ENCODE measurements at regions of chr19 and their contacts with region 1.

Region 1: GRCh38 chr19:2084993-2085720 is 11.0 kb downstream of the MOB3A start:
- DNase-seq: peak; percentile 97
- H3K4me3 Mint-ChIP-seq: peak overlapping the region; percentile 93
- H3K27ac Mint-ChIP-seq: peak overlapping the region; percentile 98
- H3K4me1 Mint-ChIP-seq: peaks cover 65% of the 10 kb centered on the region
- H3K27me3 Mint-ChIP-seq: no peaks in the 10 kb centered on the region

Region 2: DNA sequence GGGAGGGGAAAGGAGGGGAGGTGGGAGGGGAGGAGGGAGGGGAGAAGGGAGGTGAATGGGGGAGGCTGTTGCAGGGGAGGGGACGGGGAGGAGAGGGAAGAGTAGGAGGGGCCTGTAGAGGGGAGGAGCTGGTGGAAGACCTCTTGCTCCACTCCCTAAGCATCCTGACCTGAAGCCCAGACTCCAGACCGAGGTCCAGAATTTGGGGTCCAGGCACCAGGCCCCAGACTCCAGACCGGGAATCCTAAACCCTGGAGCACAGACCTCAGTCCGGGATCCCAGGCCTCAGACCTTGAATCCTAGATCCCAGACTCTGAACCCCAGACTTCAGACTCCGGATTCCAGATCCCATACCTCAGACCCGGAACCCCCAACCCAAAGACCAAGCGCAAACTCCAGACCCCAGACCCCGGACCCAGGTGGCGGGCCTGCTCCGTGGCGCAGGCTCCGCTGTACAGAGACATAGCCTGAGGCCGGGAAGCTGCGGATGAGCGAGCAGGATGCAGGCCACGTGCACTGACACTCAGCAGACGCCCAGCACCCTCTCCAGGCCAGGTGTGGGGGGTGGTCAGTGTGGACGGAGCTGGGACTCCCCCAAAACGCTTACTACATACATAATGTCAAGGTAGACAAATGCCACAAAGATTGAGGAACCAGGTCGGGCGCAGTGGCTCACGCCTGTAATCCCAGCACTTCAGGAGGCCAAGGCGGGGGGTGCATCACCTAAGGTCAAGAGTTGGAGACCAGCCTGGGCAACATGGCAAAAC is 68.9 kb before region 1 on chr19:
- CTCF ChIA-PET with region 1: interaction called, 6 read pairs
- intact Hi-C with region 1: loop called (anchors 5 kb)
- DNase-seq: peak; percentile 77
- H3K4me3 Mint-ChIP-seq: peak overlapping the region; percentile 59
- H3K27ac Mint-ChIP-seq: peak overlapping the region; percentile 47
- H3K4me1 Mint-ChIP-seq: peaks cover 17% of the 10 kb centered on the region
- H3K27me3 Mint-ChIP-seq: no peaks in the 10 kb centered on the region

Region 3: GRCh38 chr19:2050991-2051772 is 34.0 kb before region 1 on chr19 and contains the start of gene MKNK2:
- CTCF ChIA-PET with region 1: no interaction called
- intact Hi-C with region 1: loop called (anchors 2 kb)
- DNase-seq: peak; percentile 93
- H3K4me3 Mint-ChIP-seq: peak within 1 kb of the TSS; percentile 85
- H3K27ac Mint-ChIP-seq: peak within 1 kb of the TSS; percentile 93
- H3K4me1 Mint-ChIP-seq: peaks cover 53% of the 10 kb centered on the region
- H3K27me3 Mint-ChIP-seq: no peaks in the 10 kb centered on the region
- total RNA-seq, gene MKNK2: 155 to 157 TPM

Region 4: GRCh38 chr19:2123682-2124387 is 38.7 kb after region 1 on chr19:
- CTCF ChIA-PET with region 1: no interaction called
- intact Hi-C with region 1: no loop called
- DNase-seq: peak; percentile 23
- H3K4me3 Mint-ChIP-seq: no peak overlapping the region
- H3K27ac Mint-ChIP-seq: no peak overlapping the region
- H3K4me1 Mint-ChIP-seq: no peaks in the 10 kb centered on the region
- H3K27me3 Mint-ChIP-seq: no peaks in the 10 kb centered on the region

Region 5: DNA sequence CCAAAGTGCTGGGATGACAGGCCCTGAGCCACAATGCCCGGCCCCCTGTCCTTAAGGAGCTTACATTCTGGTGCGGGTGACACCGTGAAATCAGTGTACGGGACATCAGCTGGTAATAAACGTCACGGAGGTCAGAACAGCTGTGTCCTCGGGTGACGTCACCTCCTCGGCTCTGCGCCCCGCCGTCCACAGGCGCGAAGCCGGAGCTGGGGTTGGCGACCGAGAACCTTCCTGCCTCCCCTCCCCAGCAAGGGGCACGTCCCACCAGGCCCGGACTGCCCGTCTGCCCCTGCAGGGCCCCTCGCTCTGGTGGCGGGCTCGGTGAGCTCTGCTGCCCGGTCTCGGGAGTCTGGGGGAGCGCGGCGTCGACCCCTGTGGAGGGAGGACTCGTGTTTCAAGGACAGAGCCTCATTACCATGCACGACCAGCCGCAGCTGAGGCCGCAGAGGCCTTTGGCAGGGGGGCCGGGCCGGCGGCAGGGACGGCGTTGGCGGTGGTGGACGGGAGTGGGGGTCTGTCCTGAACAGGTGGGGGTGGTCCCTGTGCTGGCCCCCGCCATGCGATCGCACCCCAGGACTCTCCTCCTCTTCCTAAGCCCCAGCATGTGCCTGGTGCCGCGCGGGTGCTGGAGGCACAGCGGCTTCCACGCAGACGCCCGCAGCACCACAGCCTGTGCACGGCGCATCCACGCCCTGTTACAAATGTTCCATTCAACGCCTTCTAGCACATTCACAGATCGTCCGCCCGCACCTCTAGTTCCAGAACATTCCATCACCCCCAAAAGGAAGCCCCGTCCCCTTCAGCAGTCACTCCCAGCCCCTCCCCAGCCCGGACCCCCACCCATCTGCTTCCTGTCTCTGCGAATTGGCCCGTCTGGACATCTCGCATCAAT is 217.4 kb after region 1 on chr19:
- CTCF ChIA-PET with region 1: no interaction called
- intact Hi-C with region 1: no loop called
- DNase-seq: no peak
- H3K4me3 Mint-ChIP-seq: peak overlapping the region; percentile 19
- H3K27ac Mint-ChIP-seq: no peak overlapping the region
- H3K4me1 Mint-ChIP-seq: peaks cover 13% of the 10 kb centered on the region
- H3K27me3 Mint-ChIP-seq: peaks cover 39% of the 10 kb centered on the region

Measured in activated naive CD4-positive, alpha-beta T cell treated with anti-CD3 and anti-CD28 coated beads for 36 hours (primary cell).